ENCODE measurements at regions of chr7 and their contacts with region 1.

Region 1: GRCh38 chr7:114502454-114503254 is 88.0 kb downstream of the FOXP2 start:
- DNase-seq: no peak
- ATAC-seq: peak; percentile 87
- H3K4me3 ChIP-seq: no peak overlapping the region
- H3K27ac ChIP-seq: peak overlapping the region; percentile 76
- H3K4me1 ChIP-seq: peaks cover 13% of the 10 kb centered on the region; the same call in 1 of the 2 replicates
- H3K27me3 ChIP-seq: no peaks in the 10 kb centered on the region
- CTCF ChIP-seq: no peak

Region 2: DNA sequence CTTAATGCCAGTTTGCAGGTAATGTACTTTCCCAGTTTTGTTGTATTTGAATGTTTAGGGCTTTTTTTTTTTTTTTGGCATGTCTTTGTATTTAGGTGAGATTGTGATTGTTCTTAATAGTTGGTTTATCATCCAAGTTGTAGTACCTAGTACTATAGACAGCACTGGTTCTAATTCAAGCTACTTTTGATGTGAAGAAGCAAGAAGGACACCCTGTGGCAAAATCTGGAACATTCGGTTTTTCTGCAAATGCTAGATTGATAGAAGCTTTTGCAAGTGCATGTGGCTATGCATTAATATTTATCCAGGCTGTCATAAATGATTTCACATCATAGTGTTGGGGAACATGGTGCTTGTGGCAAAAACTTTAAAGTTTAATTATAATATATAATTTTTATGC is 160.8 kb after region 1 on chr7:
- CTCF ChIA-PET with region 1: no interaction called
- POLR2A ChIA-PET with region 1: no interaction called
- in situ Hi-C with region 1: no loop called
- intact Hi-C with region 1: loop called (anchors 10 kb)
- DNase-seq: no peak
- ATAC-seq: peak; percentile 58; the same call in 1 of the 2 replicates
- H3K4me3 ChIP-seq: no peak overlapping the region
- H3K27ac ChIP-seq: no peak overlapping the region
- H3K4me1 ChIP-seq: peaks cover 3% of the 10 kb centered on the region
- H3K27me3 ChIP-seq: no peaks in the 10 kb centered on the region
- CTCF ChIP-seq: peak; percentile 24; the same call in 1 of the 2 replicates

Measured in Panc1 (cell line).